ENCODE measurements at regions of chr11 and their contacts with region 1.

Region 1: DNA sequence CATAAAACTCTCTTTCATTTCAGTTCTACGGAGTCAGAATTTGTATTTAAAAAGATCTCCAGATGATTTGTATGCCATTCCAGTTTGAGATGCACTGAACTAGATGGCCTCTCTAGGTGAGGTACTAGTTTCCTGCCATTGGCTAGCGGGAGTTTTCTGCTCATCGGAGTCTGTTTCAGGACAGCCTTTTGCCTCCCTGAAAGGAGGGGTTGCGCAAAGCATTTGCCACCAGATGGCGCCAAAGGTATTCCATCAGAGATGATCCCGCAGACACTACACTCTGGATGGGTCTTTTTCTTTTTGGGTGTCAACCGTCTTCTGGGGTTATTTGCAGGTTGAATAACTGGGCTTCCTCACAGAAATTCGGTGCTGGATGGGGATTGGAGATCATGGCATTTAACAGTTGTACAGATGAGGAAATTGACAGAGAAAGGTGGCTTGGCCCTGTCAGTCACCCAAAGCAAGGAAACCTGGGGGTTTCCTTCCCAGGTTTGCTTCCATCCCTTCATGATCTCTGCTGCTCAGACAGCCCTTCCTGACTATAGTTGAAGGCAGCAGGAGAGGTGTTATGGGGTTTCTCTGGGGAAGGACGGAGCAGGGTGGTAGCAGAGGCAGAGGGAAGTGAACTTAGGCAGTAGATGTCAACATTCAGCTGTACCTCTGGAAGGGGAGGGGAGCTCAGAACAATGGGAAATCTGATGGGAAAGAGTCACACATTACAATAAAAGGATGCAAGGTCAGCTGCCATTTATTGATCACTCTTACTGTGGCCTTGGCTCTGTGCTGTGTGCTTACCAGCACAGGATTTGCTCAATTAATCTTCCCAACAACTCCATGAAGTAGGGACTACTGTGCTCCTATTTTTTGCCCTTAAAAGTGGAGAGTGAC is 81.6 kb downstream of the CCDC81 start:
- DNase-seq: peak; percentile 71
- H3K4me3 Mint-ChIP-seq: no peak overlapping the region
- H3K27ac Mint-ChIP-seq: peak overlapping the region; percentile 40
- H3K4me1 Mint-ChIP-seq: peaks cover 75% of the 10 kb centered on the region
- H3K27me3 Mint-ChIP-seq: no peaks in the 10 kb centered on the region

Region 2: DNA sequence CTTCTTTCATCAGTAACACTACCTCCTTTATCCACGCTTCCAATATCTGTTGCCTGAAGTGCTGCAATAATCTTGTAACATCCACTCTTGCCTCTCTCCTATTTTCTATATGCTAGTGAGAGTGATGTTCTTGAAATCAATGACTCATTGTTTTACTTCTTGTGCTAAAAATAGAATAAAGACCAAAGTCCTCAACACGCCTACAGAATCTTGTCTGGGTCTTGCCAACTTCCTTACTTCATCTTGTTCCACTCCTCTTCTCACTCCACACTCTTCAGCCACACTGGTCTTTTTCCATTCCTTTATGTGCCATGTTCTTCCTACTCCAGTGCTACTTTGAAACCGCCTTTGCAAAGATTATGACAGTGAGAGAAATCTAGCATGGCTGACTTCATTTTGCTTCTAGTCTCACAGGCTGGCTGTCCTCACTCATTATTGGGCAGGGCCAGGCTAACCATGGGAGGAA is 54.8 kb after region 1 on chr11:
- intact Hi-C with region 1: no loop called
- DNase-seq: no peak
- H3K4me3 Mint-ChIP-seq: no peak overlapping the region
- H3K27ac Mint-ChIP-seq: no peak overlapping the region
- H3K4me1 Mint-ChIP-seq: no peaks in the 10 kb centered on the region
- H3K27me3 Mint-ChIP-seq: no peaks in the 10 kb centered on the region

Region 3: DNA sequence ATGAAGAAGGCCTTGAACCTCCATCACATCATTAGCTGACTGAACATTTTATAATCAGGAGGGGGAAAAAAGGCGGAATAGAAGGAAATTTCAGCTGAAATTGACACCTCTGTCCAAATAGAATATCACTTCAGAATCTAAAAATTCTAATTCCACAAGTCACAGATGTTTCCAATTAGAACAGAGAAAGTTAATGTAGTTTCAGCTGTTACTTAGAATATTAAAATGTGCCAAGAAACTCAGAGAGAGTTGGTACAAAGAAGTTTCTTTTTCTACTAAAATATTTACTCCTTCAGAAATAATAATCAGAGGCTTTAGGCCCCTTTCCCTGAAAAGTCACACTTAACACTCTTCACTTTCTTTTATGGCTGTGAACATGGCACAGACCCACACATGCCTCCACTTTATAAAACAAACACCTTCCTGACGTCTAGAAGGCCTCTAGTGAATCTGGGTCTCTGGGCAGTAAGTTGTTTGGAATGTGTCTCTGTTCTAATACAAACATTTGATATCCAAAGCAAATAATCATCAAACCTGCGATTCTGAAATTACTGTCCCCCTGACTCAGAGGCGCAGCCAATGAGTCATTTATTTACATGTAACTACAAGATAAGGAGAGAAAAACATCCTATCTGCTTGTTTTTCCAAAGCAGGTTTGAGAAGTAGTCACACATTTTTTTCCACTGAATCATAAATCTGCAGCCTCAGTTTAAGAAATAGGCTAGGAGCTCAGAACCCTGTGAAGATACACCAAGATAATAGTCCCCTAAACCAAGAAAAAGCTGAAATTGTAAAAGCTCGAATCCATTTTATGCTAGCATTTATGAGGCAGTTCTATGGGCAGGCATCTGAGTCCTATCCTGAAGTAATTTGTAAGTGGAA is 67.7 kb after region 1 on chr11:
- intact Hi-C with region 1: loop called (anchors 1 kb)
- DNase-seq: no peak
- H3K4me3 Mint-ChIP-seq: peak overlapping the region; percentile 56
- H3K27ac Mint-ChIP-seq: peak overlapping the region; percentile 90
- H3K4me1 Mint-ChIP-seq: peaks cover 36% of the 10 kb centered on the region
- H3K27me3 Mint-ChIP-seq: peaks cover 2% of the 10 kb centered on the region

Region 4: DNA sequence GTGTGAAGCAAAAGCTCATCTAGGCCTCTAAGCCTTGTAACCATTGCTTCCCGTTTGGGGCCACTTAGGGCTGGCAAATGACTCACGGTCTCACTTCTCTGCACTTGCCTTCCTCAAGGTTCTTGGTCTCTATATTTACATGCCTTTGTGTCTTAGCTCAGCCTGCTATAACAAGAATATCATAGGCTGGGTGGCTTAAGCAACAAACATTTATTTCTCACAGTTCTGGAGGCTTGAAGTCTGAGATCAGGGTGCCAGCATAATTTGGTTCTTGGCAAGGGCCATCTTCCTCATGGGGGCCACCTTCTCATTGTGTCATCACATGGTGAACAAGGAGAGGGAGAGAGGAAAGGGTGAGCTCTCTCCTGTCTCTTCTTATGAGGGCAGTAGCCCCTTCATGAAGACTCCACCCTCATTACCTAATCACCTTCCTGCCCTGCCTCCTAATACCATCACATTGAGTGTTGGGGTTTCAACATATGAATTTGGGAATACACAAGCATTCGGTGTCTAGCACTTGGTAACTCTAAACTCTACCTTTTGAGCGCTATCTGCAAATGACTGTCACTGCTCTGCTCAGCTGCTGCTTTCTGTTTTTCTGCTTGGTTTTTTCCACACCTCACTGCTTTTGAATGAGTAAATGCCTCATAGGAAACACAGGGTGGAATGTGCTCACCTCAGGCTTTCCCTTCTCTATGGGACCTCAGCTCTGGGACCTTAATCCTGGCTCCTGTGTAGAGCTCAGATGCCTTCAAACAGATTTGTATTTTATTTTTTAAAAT is 232.3 kb after region 1 on chr11:
- intact Hi-C with region 1: loop called (anchors 5 kb)
- DNase-seq: peak; percentile 12
- H3K4me3 Mint-ChIP-seq: peak overlapping the region; percentile 60
- H3K27ac Mint-ChIP-seq: peak overlapping the region; percentile 92
- H3K4me1 Mint-ChIP-seq: peaks cover 26% of the 10 kb centered on the region
- H3K27me3 Mint-ChIP-seq: peaks cover 8% of the 10 kb centered on the region

Region 5: GRCh38 chr11:86869966-86870570 is 413.8 kb after region 1 on chr11:
- intact Hi-C with region 1: loop called (anchors 5 kb)
- DNase-seq: peak; percentile 13
- H3K4me3 Mint-ChIP-seq: no peak overlapping the region
- H3K27ac Mint-ChIP-seq: no peak overlapping the region
- H3K4me1 Mint-ChIP-seq: no peaks in the 10 kb centered on the region
- H3K27me3 Mint-ChIP-seq: peaks cover 12% of the 10 kb centered on the region

Measured in activated T-helper 1 cell treated with anti-CD3 and anti-CD28 coated beads, Interleukin-12 subunit alpha, Interleukin-12 subunit beta, Interleukin-2, Interleukin-4 antibody, amounts not matched to agents 30 ng/mL and 10 ng/mL and 1 ng/mL, durations not matched to agents 14 hours and 24 hours and 36 hours (primary cell).